ENCODE measurements at regions of chr1 and their contacts with region 1.

Region 1: DNA sequence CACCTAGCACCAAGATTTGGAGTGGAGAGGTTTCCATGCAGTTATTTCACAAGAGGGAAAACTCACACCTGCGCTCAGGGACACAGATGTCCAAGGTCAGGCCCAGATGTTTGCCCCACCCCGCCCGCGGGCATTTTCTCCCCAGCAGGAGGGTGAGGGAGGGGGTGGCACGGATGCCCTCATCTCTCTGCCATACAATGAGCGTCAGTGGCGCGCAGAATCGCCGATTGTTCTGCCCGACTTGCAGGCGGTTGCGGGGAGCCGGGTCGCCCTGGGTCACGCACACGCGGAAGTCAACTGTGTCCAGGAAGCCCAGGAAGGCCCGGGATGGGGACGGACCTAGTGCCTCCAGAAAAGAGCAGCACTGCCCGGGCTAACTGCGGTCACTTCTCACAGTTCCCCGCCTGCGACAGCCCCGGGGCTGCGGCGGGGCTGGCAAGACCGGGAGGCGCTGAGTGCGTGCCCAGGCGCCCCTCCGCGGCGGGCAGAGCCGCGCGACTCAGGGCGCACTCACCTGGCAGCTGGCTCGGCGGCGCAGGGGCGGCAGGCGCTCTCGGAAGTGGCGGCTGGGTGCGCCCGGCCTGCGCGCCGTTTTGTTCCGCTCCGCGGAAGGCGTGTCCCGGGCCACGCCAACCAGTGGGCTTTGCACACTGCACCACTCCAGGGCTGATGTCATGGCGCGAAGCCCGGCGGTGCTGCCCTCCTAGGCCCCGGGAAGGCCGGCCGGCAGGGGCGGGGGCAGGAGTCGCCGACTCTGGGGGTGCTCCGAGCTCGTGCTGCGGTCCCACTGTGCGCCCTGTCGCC is at the start of gene CSRP1:
- DNase-seq: peak; percentile 91
- H3K4me3 Mint-ChIP-seq: peak within 1 kb of the TSS; percentile 96
- H3K27ac Mint-ChIP-seq: peak within 1 kb of the TSS; percentile 91
- H3K4me1 Mint-ChIP-seq: peaks cover 69% of the 10 kb centered on the region
- H3K27me3 Mint-ChIP-seq: no peaks in the 10 kb centered on the region

Region 2: DNA sequence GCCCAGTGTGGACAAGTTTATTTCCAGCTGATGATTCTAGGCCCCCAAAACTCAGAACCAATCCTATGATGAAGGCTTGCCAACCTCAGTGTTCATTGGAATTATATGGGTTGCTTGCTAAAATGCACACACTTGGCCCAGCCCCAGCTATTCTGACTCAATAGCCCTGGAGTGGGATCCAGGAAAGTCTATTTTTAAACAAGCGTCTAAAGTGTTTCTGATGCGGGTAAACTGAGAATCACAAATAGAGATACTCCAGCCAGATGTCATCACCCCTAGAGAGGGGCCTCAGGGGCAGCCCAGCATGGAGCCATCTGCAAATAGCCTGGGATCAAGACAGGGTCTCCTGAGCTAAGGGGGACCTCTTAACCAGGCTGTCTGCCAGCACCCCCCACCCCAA is 177.5 kb before region 1 on chr1:
- CTCF ChIA-PET with region 1: no interaction called
- DNase-seq: no peak
- H3K4me3 Mint-ChIP-seq: no peak overlapping the region
- H3K27ac Mint-ChIP-seq: no peak overlapping the region
- H3K4me1 Mint-ChIP-seq: no peaks in the 10 kb centered on the region
- H3K27me3 Mint-ChIP-seq: peaks cover 33% of the 10 kb centered on the region

Region 3: GRCh38 chr1:201385299-201385891 is 121.4 kb before region 1 on chr1:
- CTCF ChIA-PET with region 1: no interaction called
- DNase-seq: peak; percentile 65
- H3K4me3 Mint-ChIP-seq: no peak overlapping the region
- H3K27ac Mint-ChIP-seq: no peak overlapping the region
- H3K4me1 Mint-ChIP-seq: no peaks in the 10 kb centered on the region
- H3K27me3 Mint-ChIP-seq: peaks cover 27% of the 10 kb centered on the region

Region 4: GRCh38 chr1:201436393-201436792 is 70.4 kb before region 1 on chr1:
- CTCF ChIA-PET with region 1: interaction called, 37 read pairs
- DNase-seq: no peak
- H3K4me3 Mint-ChIP-seq: no peak overlapping the region
- H3K27ac Mint-ChIP-seq: no peak overlapping the region
- H3K4me1 Mint-ChIP-seq: peaks cover 5% of the 10 kb centered on the region
- H3K27me3 Mint-ChIP-seq: peaks cover 34% of the 10 kb centered on the region

Region 5: DNA sequence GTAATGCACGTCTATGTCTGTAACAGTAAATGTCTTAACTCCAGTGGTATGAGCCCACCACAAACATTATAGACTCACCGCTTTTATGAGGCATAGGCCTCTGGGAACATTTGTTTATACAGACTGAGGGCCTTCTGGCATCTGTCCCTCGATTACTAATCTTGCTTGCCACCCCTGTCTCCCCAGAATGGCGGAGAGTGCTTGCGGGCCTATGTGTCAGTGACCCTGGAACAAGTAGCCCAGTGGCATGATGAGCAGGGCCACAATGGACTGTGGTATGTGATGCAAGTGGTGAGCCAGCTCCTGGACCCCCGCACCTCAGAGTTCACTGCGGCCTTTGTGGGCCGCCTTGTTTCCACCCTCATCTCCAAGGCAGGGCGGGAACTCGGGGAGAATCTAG is 363.6 kb after region 1 on chr1:
- CTCF ChIA-PET with region 1: no interaction called
- DNase-seq: no peak
- H3K4me3 Mint-ChIP-seq: no peak overlapping the region
- H3K27ac Mint-ChIP-seq: no peak overlapping the region
- H3K4me1 Mint-ChIP-seq: no peaks in the 10 kb centered on the region
- H3K27me3 Mint-ChIP-seq: no peaks in the 10 kb centered on the region

Region 6: DNA sequence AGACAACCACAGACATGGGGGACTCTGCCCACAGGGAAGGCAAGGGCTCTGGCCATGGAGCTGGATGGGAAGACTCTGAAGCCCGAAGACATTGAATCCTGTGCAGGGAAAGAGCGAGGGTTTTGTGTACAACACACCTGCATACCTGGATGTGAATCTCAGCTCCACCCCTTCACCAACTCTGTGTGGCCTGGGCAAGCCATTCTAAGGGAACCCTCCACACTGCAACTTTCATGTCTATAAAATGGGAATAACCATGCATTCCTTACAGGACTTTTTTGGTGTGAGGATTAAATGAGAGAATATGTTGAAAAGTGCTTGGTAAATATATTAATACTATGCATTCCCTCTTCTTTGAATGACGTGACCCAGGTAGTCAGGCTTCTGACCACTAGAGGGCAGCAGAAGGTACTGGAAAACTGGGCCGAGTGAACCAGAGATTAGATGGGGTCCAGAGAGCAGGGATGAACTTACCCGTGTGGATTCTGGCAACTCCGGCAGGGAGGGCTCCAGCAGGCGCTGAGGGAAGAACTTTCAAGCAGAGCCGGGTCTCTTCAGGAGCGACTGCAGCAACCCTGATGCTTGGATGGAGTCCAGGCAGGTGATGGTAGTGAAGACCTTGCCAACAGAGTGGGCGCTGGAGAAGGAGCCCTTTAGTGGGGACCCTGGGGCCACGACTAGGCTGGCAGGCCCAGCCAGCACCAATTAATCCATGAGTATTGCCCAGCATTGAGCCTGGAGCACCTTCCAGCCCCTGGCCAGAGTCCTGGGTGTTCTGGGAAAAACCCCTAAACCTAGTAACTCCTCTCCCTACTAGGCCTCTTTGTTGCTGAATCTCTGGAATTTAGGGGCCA is 502.8 kb after region 1 on chr1:
- CTCF ChIA-PET with region 1: no interaction called
- DNase-seq: peak; percentile 71
- H3K4me3 Mint-ChIP-seq: no peak overlapping the region
- H3K27ac Mint-ChIP-seq: no peak overlapping the region
- H3K4me1 Mint-ChIP-seq: no peaks in the 10 kb centered on the region
- H3K27me3 Mint-ChIP-seq: no peaks in the 10 kb centered on the region

Measured in activated naive CD4-positive, alpha-beta T cell treated with anti-CD3 and anti-CD28 coated beads, Interleukin-2, amount 10 ng/mL, durations not matched to agents 7 days and 5 days (primary cell).